Activated naive CD4-positive, alpha-beta T cell treated with anti-CD3 and anti-CD28 coated beads for 36 hours (primary cell): ENCODE measurements at regions of chr14 and their contacts with region 1.

Region 1: GRCh38 chr14:75560962-75561432 is 17.4 kb upstream of the FLVCR2 start:
- DNase-seq: peak; percentile 72
- H3K4me3 Mint-ChIP-seq: no peak overlapping the region
- H3K27ac Mint-ChIP-seq: peak overlapping the region; percentile 53
- H3K4me1 Mint-ChIP-seq: peaks cover 67% of the 10 kb centered on the region
- H3K27me3 Mint-ChIP-seq: no peaks in the 10 kb centered on the region

Region 2: GRCh38 chr14:75132382-75133086 is 428.5 kb before region 1 on chr14:
- CTCF ChIA-PET with region 1: interaction called, 4 read pairs
- intact Hi-C with region 1: loop called (anchors 5 kb)
- DNase-seq: peak; percentile 64
- H3K4me3 Mint-ChIP-seq: no peak overlapping the region
- H3K27ac Mint-ChIP-seq: peak overlapping the region; percentile 24
- H3K4me1 Mint-ChIP-seq: peaks cover 19% of the 10 kb centered on the region
- H3K27me3 Mint-ChIP-seq: no peaks in the 10 kb centered on the region

Region 3: DNA sequence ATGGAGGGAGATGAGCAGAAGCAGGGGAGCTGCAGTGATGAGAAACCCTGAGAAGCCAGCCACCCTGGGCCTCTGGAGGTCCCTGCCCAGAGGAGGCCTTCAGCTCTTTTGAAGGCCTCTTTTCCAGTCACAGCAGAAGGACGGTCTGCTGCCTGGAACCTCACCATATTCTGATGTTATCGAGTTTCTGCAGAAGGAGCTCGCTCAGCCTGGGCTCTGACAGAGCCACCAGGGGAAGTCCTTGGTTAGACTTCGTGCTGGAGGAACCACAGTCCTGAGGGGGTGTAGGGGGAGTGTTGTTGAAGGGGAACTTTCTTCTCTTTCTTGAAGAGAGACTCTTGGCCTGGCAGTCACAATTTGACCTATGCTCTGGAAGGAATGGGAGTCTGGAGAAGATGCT is 63.8 kb before region 1 on chr14:
- CTCF ChIA-PET with region 1: interaction called, 18 read pairs
- intact Hi-C with region 1: no loop called
- DNase-seq: no peak
- H3K4me3 Mint-ChIP-seq: no peak overlapping the region
- H3K27ac Mint-ChIP-seq: no peak overlapping the region
- H3K4me1 Mint-ChIP-seq: peaks cover 30% of the 10 kb centered on the region
- H3K27me3 Mint-ChIP-seq: no peaks in the 10 kb centered on the region

Region 4: DNA sequence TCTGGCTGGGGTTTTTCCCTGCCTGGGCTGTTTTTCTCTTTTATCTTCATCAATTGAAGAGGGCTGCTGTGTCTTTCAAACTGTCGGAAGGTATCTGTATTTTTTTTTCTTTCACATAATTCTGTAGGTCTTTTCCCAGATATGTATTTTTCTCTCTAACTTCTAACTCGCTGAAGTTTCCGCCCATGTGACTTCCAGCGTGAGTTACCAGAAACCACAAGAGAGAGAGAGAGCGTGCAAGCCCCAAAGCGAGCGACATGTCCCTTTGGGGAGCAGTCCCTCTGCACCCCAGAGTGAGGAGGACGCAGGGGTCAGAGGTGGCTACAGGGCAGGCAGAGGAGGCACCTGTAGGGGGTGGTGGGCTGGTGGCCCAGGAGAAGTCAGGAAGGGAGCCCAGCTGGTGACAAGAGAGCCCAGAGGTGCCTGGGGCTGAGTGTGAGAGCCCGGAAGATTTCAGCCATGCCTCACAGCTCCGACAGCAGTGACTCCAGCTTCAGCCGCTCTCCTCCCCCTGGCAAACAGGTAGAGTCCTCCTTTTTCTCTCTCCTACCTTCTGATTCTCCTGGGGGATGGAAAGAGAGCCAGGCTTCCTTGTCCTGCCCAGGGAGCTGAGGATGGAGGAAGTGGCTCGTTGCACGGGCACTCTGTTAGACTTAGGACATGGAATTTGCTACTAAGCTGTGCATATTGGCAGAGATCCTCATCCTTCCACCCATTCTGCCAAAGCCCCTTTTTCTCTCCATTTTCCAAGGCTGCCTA is 38.6 kb before region 1 on chr14 and contains the start of gene BATF:
- CTCF ChIA-PET with region 1: interaction called, 88 read pairs
- intact Hi-C with region 1: loop called (anchors 1 kb)
- DNase-seq: peak; percentile 91
- H3K4me3 Mint-ChIP-seq: peak within 1 kb of the TSS; percentile 99
- H3K27ac Mint-ChIP-seq: peak within 1 kb of the TSS; percentile 100
- H3K4me1 Mint-ChIP-seq: peaks cover 61% of the 10 kb centered on the region
- H3K27me3 Mint-ChIP-seq: no peaks in the 10 kb centered on the region
- total RNA-seq, gene BATF: 178 to 179 TPM

Region 5: DNA sequence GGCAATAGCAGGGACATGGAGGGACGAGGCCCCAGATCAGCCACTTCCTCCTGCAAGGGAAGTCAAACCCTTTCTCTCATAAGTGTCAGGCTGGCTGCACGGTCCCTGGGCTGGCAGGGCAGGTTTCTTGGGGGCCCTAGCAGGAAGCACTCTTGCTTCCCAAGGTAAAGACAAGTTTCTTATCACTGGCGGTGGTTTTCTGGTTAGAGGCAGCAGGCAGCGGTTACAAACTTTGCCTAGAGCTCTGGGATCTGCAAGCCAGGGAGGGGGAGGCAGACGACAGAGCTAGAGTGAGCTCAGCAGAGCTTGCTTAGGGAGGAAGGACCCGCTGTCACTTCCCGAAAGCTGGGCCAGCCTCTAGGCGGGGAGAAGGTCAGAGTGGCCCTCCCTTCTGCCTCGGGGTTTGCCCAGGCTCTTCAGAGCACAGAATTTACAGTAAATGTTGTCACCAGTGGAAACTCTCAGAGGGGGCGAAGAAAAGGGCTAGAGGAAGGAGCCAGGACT is 18.4 kb before region 1 on chr14:
- CTCF ChIA-PET with region 1: interaction called, 79 read pairs
- intact Hi-C with region 1: loop called (anchors 1 kb)
- DNase-seq: peak; percentile 97
- H3K4me3 Mint-ChIP-seq: peak overlapping the region; percentile 65
- H3K27ac Mint-ChIP-seq: peak overlapping the region; percentile 99
- H3K4me1 Mint-ChIP-seq: peaks cover 84% of the 10 kb centered on the region
- H3K27me3 Mint-ChIP-seq: no peaks in the 10 kb centered on the region

Region 6: DNA sequence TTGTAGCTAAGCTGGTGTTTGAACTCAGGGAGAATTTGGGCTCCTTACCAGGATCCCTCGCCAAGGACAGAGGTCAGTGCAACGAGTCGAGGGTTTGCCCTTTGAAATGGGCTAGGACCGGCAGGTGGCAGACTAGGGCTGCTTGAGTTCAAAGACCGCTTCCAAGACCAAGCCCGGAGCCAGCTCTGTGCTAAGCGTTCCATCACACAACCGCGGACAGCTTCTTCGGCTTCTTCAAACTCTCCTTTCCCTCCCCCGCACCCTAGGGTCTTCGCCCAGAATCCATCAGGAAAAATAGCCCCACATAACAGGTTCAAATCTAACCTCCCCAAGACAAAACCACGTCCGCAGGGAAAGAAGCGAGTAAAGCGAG is 16.7 kb after region 1 on chr14:
- CTCF ChIA-PET with region 1: interaction called, 30 read pairs
- intact Hi-C with region 1: loop called (anchors 1 kb)
- DNase-seq: peak; percentile 88
- H3K4me3 Mint-ChIP-seq: peak overlapping the region; percentile 82
- H3K27ac Mint-ChIP-seq: peak overlapping the region; percentile 78
- H3K4me1 Mint-ChIP-seq: peaks cover 22% of the 10 kb centered on the region
- H3K27me3 Mint-ChIP-seq: no peaks in the 10 kb centered on the region

Region 7: DNA sequence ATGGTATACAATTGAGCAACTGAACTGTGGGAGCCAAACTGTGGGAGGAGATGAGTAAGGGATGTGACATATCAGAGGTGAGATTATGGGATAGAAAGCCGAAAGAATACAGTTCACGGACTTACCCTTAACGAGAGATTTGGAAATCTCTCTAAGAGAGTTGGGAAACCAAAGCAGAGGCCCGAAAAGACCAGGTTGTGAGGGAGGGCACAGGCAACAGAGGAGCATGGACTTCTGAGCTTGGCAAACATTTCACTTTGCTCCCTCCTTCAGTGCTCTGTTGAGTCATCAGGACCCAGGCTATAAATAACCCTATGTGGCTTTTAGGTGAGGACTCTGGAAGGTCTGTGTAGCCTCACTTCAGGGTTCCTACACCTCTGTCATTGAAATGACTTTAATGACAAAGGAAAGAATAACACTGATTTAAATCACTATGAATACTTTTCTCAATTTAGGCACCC is 300.2 kb after region 1 on chr14:
- CTCF ChIA-PET with region 1: no interaction called
- intact Hi-C with region 1: no loop called
- DNase-seq: no peak
- H3K4me3 Mint-ChIP-seq: no peak overlapping the region
- H3K27ac Mint-ChIP-seq: no peak overlapping the region
- H3K4me1 Mint-ChIP-seq: peaks cover 3% of the 10 kb centered on the region
- H3K27me3 Mint-ChIP-seq: no peaks in the 10 kb centered on the region

Region 8: DNA sequence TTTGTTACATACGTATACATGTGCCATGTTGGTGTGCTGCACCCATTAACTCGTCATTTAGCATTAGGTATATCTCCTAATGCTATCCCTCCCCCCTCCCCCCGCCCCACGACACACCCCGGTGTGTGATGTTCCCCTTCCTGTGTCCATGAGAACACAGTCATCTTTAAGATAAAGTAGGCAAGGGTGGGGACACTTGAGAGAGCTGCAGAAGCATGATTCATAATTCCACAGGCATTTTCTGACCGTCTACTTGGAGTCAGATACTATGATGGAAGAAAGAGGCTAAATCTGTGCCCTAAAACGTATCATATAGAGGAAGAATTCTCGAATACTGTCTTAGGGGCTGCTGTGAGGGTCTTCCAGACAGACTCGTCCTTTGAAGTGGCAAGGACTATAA is 1054.3 kb after region 1 on chr14:
- CTCF ChIA-PET with region 1: no interaction called
- intact Hi-C with region 1: no loop called
- DNase-seq: no peak
- H3K4me3 Mint-ChIP-seq: no peak overlapping the region
- H3K27ac Mint-ChIP-seq: no peak overlapping the region
- H3K4me1 Mint-ChIP-seq: no peaks in the 10 kb centered on the region
- H3K27me3 Mint-ChIP-seq: peaks cover 9% of the 10 kb centered on the region